ENCODE measurements at regions of chr1 and their contacts with region 1.

Region 1: GRCh38 chr1:183023601-183024316 is 539 bp downstream of the LAMC1 start:
- DNase-seq: peak; percentile 80
- ATAC-seq: peak; percentile 29

Region 2: GRCh38 chr1:182977480-182977879 is 46.3 kb before region 1 on chr1:
- intact Hi-C with region 1: no loop called
- DNase-seq: no peak
- ATAC-seq: no peak

Region 3: GRCh38 chr1:183090391-183091006 is 66.7 kb after region 1 on chr1:
- intact Hi-C with region 1: loop called (anchors 5 kb)
- DNase-seq: no peak
- ATAC-seq: peak; percentile 92

Region 4: GRCh38 chr1:183105449-183105848 is 81.7 kb after region 1 on chr1:
- intact Hi-C with region 1: loop called (anchors 5 kb)
- DNase-seq: no peak
- ATAC-seq: no peak

Region 5: DNA sequence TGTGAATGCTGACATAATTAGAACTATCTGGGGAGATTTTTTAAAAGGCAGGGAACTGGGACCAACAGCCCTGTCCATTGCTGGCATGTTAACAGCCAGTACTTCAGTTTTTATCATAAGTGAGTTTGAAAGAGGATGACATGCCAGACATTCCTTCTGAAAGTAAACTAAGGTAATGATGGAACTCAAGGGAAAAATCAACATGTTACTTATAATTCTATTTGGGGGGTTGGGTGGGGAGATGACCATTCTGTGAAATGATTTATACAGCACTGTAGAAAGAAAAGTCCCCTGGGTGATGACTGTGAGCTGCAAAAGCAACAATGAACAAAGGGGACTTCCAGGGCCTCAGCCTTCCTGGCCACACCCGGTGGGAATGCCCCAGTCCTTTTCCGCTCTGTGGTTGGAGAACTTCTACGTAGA is 156.9 kb after region 1 on chr1:
- intact Hi-C with region 1: loop called (anchors 2 kb)
- DNase-seq: no peak
- ATAC-seq: peak; percentile 82

Region 6: DNA sequence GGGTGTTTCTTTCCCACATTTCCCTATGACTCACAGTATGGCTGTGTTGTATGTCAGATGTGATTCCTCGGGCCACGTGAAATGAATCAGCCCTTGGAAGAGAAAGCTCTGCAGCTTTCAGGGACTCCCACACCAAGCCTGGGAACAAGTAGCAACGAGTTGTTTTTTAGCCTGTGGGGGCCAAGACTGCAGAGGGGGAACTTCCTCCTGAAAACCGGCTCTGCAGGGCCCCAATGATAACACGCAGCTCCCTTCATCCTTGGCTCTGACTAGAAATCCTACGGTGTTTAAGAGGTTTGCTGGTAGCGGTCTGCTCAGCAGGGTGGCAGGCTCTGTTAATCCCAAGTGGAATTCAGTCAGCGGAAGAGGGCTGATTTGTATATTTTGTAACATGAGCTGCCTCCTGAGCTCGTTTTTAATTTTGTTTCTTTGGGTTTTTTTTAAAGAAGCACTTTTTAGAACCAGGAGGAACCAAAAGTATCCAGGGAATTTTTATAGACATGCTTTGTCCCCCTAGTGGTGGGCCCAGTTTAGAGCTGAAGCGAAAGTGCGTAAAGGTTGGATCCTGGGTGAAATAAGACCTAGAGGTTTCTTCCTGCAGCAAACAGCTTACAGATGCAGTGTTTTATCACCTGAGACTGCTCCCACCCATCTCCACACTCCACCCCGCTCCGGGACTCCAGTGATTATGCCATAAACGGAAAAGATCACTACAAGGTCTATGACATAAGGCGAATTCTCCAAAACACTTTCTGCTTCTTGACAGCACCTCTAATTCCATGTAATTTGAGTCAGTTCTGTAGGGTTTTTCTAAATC is 211.1 kb after region 1 on chr1:
- intact Hi-C with region 1: loop called (anchors 5 kb)
- DNase-seq: peak; percentile 74
- ATAC-seq: peak; percentile 91

Region 7: GRCh38 chr1:183310753-183311479 is 287.2 kb after region 1 on chr1:
- intact Hi-C with region 1: loop called (anchors 5 kb)
- DNase-seq: no peak
- ATAC-seq: no peak

Measured in Right ventricle myocardium inferior (tissue), 1 donor.